GM12878 (cell line): ENCODE measurements at regions of chr3 and their contacts with region 1.

Region 1: GRCh38 chr3:62622553-62623193 is 249.3 kb upstream of the FEZF2 start:
- DNase-seq: peak; percentile 1
- ATAC-seq: peak; percentile 72
- H3K4me3 ChIP-seq: no peak overlapping the region
- H3K27ac ChIP-seq: no peak overlapping the region
- H3K4me1 ChIP-seq: no peaks in the 10 kb centered on the region; the same call in 1 of the 2 replicates
- H3K27me3 ChIP-seq: no peaks in the 10 kb centered on the region
- CTCF ChIP-seq: peak; percentile 53 to 68 (median 56)
- EP300 ChIP-seq: no peak
- POLR2A ChIP-seq: no peak
- RAD21 ChIP-seq: peak; percentile 74

Region 2: DNA sequence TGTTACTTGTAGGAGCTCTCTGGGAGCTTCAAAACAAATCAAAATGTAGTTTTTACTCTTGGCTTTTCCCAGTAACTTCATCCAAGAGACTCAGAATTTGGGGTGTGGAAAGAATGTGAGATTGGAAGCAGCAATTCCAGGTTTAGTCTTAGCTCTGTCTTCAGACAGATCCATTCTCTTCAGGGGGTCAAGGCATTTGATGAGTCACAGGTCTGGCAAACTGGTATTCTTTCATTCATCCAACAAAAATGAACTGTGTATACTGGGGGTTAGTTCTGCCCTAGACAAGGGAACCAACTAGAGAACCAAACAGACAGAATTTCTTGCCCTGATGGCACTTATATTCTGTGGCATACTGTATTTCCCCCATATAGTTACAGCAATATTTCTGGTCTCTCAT is 288.9 kb after region 1 on chr3:
- CTCF ChIA-PET with region 1: no interaction called
- POLR2A ChIA-PET with region 1: no interaction called
- RAD21 ChIA-PET with region 1: no interaction called
- SMC1A ChIA-PET with region 1: no interaction called
- in situ Hi-C with region 1: no loop called
- intact Hi-C with region 1: no loop called
- DNase-seq: no peak
- ATAC-seq: no peak
- H3K4me3 ChIP-seq: no peak overlapping the region
- H3K27ac ChIP-seq: no peak overlapping the region
- H3K4me1 ChIP-seq: no peaks in the 10 kb centered on the region
- H3K27me3 ChIP-seq: no peaks in the 10 kb centered on the region
- CTCF ChIP-seq: no peak
- EP300 ChIP-seq: no peak
- POLR2A ChIP-seq: no peak
- RAD21 ChIP-seq: no peak

Region 3: DNA sequence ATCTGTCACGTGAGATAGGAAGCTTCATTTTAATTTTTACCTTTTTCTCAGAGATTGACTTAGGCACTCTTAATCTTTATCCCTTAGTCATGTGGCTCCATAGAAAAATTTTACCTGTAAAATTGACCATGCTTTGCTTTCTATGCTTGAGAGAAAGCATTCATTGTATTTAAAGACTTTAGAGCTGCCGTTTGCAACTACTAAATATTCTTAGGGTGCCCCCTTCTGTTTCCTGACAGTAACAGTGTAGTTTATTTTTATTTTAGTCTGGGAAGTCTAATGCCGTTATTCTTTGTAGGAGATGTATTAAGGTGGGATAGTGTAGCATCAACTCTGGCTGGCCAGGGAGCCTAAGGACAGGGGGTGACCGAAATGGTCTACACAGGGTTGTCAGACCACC is 571.0 kb after region 1 on chr3:
- CTCF ChIA-PET with region 1: interaction called, 4 read pairs
- POLR2A ChIA-PET with region 1: no interaction called
- RAD21 ChIA-PET with region 1: no interaction called
- SMC1A ChIA-PET with region 1: no interaction called
- in situ Hi-C with region 1: no loop called
- intact Hi-C with region 1: loop called (anchors 1 kb)
- DNase-seq: no peak
- ATAC-seq: no peak
- H3K4me3 ChIP-seq: no peak overlapping the region
- H3K27ac ChIP-seq: no peak overlapping the region
- H3K4me1 ChIP-seq: no peaks in the 10 kb centered on the region
- H3K27me3 ChIP-seq: no peaks in the 10 kb centered on the region
- CTCF ChIP-seq: no peak; a peak in 1 of 6 replicates
- EP300 ChIP-seq: no peak
- POLR2A ChIP-seq: no peak
- RAD21 ChIP-seq: peak; percentile 49

Region 4: GRCh38 chr3:63228087-63229023 is 605.7 kb after region 1 on chr3:
- CTCF ChIA-PET with region 1: interaction called, 17 read pairs
- POLR2A ChIA-PET with region 1: no interaction called
- RAD21 ChIA-PET with region 1: interaction called, 3 read pairs
- SMC1A ChIA-PET with region 1: no interaction called
- in situ Hi-C with region 1: no loop called
- intact Hi-C with region 1: loop called (anchors 2 kb)
- DNase-seq: no peak
- ATAC-seq: peak; percentile 84
- H3K4me3 ChIP-seq: no peak overlapping the region
- H3K27ac ChIP-seq: no peak overlapping the region
- H3K4me1 ChIP-seq: no peaks in the 10 kb centered on the region
- H3K27me3 ChIP-seq: no peaks in the 10 kb centered on the region
- CTCF ChIP-seq: peak; percentile 23 to 48 (median 47); a peak in 4 of 6 replicates
- EP300 ChIP-seq: no peak
- POLR2A ChIP-seq: no peak
- RAD21 ChIP-seq: peak; percentile 50; the same call in 1 of the 2 replicates

Region 5: DNA sequence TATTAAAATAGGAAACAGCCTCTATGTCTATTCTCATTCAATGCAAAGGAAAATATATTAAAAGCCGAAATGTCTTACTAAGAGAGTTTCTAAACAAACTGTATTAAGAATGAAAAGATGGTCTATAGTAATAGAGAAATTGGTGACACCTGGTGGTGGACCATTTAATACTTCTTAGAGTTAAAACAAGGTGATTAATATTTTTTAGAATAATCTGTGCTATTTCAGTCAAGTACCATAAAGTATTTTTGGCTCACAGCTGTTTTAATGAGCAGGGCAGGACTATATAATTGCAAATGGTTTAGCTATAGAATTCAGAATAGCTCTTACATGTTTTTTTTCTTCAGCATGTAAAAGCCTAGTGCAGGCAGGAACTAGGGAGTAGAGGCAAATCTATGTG is 711.2 kb after region 1 on chr3:
- CTCF ChIA-PET with region 1: interaction called, 3 read pairs
- POLR2A ChIA-PET with region 1: no interaction called
- RAD21 ChIA-PET with region 1: no interaction called
- SMC1A ChIA-PET with region 1: no interaction called
- in situ Hi-C with region 1: no loop called
- intact Hi-C with region 1: loop called (anchors 2 kb)
- DNase-seq: no peak
- ATAC-seq: no peak
- H3K4me3 ChIP-seq: no peak overlapping the region
- H3K27ac ChIP-seq: no peak overlapping the region
- H3K4me1 ChIP-seq: no peaks in the 10 kb centered on the region
- H3K27me3 ChIP-seq: no peaks in the 10 kb centered on the region
- CTCF ChIP-seq: peak in 1 of 3 experiments; percentile 1; a peak in 1 of 6 replicates
- EP300 ChIP-seq: no peak
- POLR2A ChIP-seq: no peak
- RAD21 ChIP-seq: no peak

Region 6: DNA sequence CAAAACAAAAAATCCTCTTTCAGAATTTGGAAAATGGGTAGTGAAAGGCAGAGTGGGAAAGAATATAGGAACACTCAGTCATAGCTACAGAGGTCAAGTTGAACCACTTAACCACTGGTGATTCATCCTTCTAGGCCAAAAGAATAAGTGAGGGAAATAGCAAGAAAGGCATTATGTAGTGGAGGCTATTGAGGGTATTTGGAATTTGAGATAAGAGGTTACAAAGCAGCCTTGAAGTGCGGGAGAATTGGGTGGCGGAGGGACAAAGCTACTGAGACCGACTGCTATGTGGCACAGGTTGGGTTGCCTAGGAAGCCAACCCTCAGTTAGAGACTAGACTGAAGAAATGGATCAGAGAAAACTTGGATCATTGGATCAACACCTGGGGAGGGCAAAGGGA is 764.9 kb after region 1 on chr3:
- CTCF ChIA-PET with region 1: no interaction called
- POLR2A ChIA-PET with region 1: no interaction called
- RAD21 ChIA-PET with region 1: no interaction called
- SMC1A ChIA-PET with region 1: no interaction called
- in situ Hi-C with region 1: no loop called
- intact Hi-C with region 1: no loop called
- DNase-seq: no peak
- ATAC-seq: no peak
- H3K4me3 ChIP-seq: no peak overlapping the region
- H3K27ac ChIP-seq: no peak overlapping the region
- H3K4me1 ChIP-seq: no peaks in the 10 kb centered on the region
- H3K27me3 ChIP-seq: no peaks in the 10 kb centered on the region; a peak in 1 of 4 replicates
- CTCF ChIP-seq: no peak
- EP300 ChIP-seq: no peak
- POLR2A ChIP-seq: no peak
- RAD21 ChIP-seq: no peak